ENCODE measurements at regions of chr11 and their contacts with region 1.

Region 1: DNA sequence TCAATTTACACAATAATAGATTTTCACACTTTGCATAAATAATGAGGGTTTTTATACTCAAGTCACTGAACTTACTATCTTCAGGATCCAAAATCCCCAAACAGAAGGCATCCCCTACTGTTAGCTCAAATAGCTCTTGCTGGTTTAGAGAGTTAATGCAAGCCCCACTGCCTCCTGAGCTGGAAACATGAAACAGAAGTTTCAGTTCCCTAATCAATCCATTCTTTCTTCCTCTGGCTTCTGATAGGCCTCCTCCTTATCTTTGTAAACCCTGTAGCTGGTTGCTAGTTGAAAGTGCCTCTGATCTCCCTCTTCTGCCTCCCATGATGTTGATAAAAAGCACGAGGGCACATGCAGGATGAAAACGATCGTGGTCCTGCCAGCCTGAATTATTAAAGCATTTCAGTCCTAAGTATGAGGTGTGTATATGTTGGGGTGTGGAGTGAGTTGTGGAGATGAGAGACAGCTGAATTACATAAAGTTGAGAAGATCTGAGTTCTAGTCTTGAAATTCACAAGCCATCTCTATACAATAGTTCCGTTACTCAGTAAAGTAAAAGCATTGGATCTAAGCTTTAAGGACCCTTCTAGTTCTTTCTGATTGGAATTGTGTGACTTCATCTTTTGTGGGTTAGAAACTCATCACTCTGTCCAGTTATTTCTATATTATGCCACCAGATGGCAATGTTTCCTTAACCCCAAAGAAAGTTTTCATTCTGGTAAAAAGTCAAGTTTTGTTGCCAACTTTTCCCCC is 35.0 kb upstream of the EHF start:
- DNase-seq: peak; percentile 25
- ATAC-seq: peak; percentile 92
- H3K4me3 Mint-ChIP-seq: peak overlapping the region; percentile 29
- H3K27ac Mint-ChIP-seq: peak overlapping the region; percentile 77
- H3K4me1 Mint-ChIP-seq: peaks cover 25% of the 10 kb centered on the region
- H3K27me3 Mint-ChIP-seq: no peaks in the 10 kb centered on the region
- CTCF ChIP-seq: peak; percentile 18

Region 2: DNA sequence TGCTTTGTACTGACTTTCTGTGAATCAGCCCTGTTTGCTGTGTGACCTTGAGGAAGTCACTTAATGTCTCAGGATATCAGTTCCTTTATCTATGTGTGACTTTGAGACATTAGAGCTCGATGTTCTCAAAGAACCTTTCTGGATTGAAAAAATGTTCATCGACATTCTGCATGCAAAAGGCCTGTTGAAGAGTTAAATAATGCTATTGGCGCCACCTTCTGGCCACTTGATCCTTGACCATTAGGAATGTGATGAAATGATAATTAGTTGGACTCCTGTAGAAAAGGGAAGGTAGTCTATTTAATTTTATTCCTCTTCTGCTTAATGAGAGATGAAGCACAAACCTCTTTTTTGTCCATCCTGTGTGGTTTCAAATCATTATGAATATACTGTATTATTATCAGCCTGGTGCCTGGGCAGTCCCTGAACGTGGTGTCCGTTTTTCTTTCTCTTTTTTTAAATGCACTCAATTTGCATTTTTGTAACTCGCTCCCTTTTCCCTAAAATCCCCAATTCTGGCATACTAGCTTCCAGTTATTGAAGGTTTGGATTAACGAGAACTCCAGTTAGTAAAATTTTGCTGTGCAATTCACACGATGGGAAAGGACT is 93.0 kb before region 1 on chr11:
- CTCF ChIA-PET with region 1: no interaction called
- POLR2A ChIA-PET with region 1: no interaction called
- intact Hi-C with region 1: no loop called
- DNase-seq: no peak
- ATAC-seq: no peak
- H3K4me3 Mint-ChIP-seq: no peak overlapping the region
- H3K27ac Mint-ChIP-seq: no peak overlapping the region
- H3K4me1 Mint-ChIP-seq: no peaks in the 10 kb centered on the region
- H3K27me3 Mint-ChIP-seq: peaks cover 5% of the 10 kb centered on the region
- CTCF ChIP-seq: peak; percentile 65

Region 3: GRCh38 chr11:34565417-34566207 is 20.3 kb before region 1 on chr11:
- CTCF ChIA-PET with region 1: interaction called, 14 read pairs
- POLR2A ChIA-PET with region 1: no interaction called
- intact Hi-C with region 1: no loop called
- DNase-seq: no peak
- ATAC-seq: peak; percentile 71
- H3K4me3 Mint-ChIP-seq: no peak overlapping the region
- H3K27ac Mint-ChIP-seq: no peak overlapping the region
- H3K4me1 Mint-ChIP-seq: no peaks in the 10 kb centered on the region
- H3K27me3 Mint-ChIP-seq: peaks cover 27% of the 10 kb centered on the region
- CTCF ChIP-seq: no peak

Region 4: DNA sequence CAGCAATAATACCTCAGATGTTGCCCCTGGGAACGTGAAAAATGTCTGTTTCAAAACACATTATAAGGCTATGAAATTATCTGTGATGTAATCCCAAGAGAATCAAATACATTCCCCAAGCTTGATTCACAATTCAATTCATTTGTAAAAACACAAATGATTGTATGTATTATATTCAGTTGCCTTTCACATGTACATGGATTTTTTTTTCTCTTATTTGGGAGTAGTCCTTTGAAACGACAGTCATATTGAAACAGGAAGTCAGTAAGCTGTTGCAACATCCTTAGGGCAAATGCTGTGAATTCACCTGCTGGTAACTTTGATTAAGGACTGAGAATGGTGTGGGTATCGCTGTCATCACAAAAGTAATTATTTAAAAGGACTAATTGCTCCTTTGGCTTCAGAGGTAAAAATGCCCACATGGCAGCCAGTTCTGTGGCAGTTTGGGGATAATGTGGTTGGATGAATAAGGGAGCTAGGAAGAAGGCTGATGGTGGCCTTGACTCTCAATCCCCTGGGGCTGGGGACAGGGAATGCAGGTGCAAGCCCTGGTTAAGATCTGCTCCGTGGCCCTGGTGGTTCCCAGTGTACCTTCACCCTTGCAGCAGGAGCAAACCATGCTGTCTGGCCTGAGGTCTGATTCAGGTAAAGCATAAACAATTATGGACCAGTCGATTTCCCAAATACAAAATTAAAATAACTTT is 48.2 kb after region 1 on chr11:
- CTCF ChIA-PET with region 1: interaction called, 4 read pairs
- POLR2A ChIA-PET with region 1: no interaction called
- intact Hi-C with region 1: loop called (anchors 1 kb)
- DNase-seq: no peak
- ATAC-seq: peak; percentile 84
- H3K4me3 Mint-ChIP-seq: peak overlapping the region; percentile 21
- H3K27ac Mint-ChIP-seq: peak overlapping the region; percentile 85
- H3K4me1 Mint-ChIP-seq: peaks cover 16% of the 10 kb centered on the region
- H3K27me3 Mint-ChIP-seq: no peaks in the 10 kb centered on the region
- CTCF ChIP-seq: no peak

Region 5: DNA sequence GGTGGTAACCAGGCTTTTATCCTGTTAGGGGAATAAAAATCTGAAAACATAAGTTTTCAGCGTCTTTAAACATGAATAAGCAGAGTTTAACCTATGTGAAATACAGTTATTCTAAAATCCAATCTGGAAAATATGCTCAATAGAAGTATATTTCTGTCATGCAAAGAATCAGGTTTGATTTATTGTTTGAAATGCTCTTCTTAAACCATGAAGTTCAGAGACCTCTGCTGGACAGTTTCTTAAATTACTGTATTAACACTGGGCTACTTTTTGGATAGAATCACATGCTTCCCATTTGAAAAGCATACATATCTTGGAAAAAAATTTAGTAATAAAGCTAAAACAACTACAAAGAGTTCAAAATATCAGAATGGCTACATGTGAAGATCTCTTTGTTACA is 304.9 kb after region 1 on chr11:
- CTCF ChIA-PET with region 1: interaction called, 74 read pairs
- POLR2A ChIA-PET with region 1: interaction called, 3 read pairs
- intact Hi-C with region 1: loop called (anchors 1 kb)
- DNase-seq: no peak
- ATAC-seq: no peak
- H3K4me3 Mint-ChIP-seq: no peak overlapping the region
- H3K27ac Mint-ChIP-seq: no peak overlapping the region
- H3K4me1 Mint-ChIP-seq: no peaks in the 10 kb centered on the region
- H3K27me3 Mint-ChIP-seq: no peaks in the 10 kb centered on the region
- CTCF ChIP-seq: no peak

Region 6: GRCh38 chr11:35165423-35166368 is 579.8 kb after region 1 on chr11:
- CTCF ChIA-PET with region 1: no interaction called
- POLR2A ChIA-PET with region 1: no interaction called
- intact Hi-C with region 1: loop called (anchors 10 kb)
- DNase-seq: peak; percentile 55
- ATAC-seq: peak; percentile 68
- H3K4me3 Mint-ChIP-seq: peak overlapping the region; percentile 76
- H3K27ac Mint-ChIP-seq: peak overlapping the region; percentile 91
- H3K4me1 Mint-ChIP-seq: peaks cover 100% of the 10 kb centered on the region
- H3K27me3 Mint-ChIP-seq: no peaks in the 10 kb centered on the region
- CTCF ChIP-seq: no peak

Region 7: DNA sequence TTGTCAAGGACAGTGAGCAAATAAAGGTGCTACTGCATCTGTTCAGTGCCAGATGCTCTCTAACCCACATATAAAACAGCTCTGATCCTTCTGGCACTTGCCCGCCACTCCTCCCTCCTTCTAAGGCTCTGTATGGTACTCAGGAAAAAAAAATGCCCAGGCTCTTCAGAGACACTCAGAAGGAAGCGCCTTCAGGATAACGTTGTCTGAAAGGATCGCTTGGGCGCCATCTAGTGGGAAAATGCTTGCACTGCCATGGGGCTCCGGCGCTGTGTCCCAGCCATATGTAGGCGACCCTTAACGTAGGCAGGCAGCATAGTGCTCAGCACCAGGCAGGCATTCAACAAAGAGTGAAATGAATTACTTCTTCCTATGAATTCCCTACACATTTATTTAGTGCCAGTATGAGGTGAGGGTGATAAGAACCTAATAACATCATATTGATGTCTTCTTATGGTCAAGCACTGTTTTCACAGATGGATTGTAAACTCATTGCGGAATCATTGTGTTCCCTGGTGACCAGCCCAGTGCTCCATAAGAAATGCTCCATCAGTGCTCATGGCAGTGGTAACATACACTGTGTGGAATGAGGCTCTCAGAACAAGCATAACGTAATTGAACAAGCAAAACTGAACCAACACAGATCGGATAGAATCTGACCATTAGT is 899.9 kb after region 1 on chr11:
- CTCF ChIA-PET with region 1: interaction called, 5 read pairs
- POLR2A ChIA-PET with region 1: no interaction called
- intact Hi-C with region 1: loop called (anchors 1 kb)
- DNase-seq: peak; percentile 59
- ATAC-seq: peak; percentile 73
- H3K4me3 Mint-ChIP-seq: no peak overlapping the region
- H3K27ac Mint-ChIP-seq: no peak overlapping the region
- H3K4me1 Mint-ChIP-seq: no peaks in the 10 kb centered on the region
- H3K27me3 Mint-ChIP-seq: peaks cover 22% of the 10 kb centered on the region
- CTCF ChIP-seq: peak; percentile 60

Measured in activated B cell treated with CpG ODN at 0.5 μM for 24 hours (primary cell).